ENCODE measurements at regions of chr3 and their contacts with region 1.

Region 1: GRCh38 chr3:126134219-126134975 is 46.0 kb downstream of the ALDH1L1 start:
- DNase-seq: peak; percentile 72 to 85 (median 78)
- H3K4me3 ChIP-seq: no peak overlapping the region
- H3K27ac ChIP-seq: no peak overlapping the region
- H3K4me1 ChIP-seq: no peaks in the 10 kb centered on the region
- H3K27me3 ChIP-seq: no peaks in the 10 kb centered on the region
- CTCF ChIP-seq: peak; percentile 75 to 92 (median 88)
- EP300 ChIP-seq: no peak
- POLR2A ChIP-seq: peak; percentile 23

Region 2: GRCh38 chr3:126197854-126198584 is 63.6 kb after region 1 on chr3:
- intact Hi-C with region 1: loop called in 2 of 4 experiments (anchors 5 to 10 kb)
- DNase-seq: peak; percentile 51 to 79 (median 70)
- H3K4me3 ChIP-seq: no peak overlapping the region
- H3K27ac ChIP-seq: no peak overlapping the region
- H3K4me1 ChIP-seq: no peaks in the 10 kb centered on the region
- H3K27me3 ChIP-seq: no peaks in the 10 kb centered on the region
- CTCF ChIP-seq: peak; percentile 28 to 57 (median 47)
- EP300 ChIP-seq: no peak
- POLR2A ChIP-seq: no peak

Region 3: DNA sequence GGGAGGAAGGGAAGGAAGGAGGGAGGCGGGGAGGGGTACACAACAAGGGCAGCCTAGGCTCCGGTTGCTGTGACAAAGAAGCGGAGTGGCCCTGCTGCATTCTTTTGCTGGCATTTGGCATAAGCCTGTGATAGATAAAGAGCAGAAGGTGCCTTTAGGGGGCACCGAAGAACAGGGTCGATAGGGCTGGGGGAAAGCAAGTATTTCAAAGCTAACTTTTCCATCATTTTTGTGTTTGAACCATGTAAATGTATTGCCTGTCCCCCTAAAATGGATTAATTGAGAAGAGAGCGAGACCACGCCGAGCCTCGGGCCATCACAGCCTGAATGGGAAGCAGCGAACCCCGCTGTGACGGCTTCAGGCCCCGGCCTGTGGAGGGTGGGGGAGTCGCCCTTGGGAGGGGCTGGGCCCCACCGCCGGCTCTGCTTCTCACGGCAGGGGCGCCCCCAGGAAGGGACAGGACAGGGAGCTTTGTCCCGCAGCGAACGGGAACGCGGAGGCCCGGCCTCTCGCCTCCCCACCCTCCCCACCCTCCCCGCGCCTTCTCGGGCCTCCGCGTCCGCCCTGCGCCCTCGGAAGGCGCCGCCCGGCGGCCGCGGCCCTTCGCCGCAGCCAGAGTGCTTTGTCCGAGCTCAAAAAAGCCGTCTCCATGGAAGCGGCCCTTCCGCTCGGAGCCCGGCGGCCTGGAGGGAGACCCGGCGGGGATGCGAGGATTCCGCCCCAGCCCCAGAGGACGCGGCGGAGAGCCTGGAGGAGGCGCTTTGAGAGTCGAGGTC is 78.4 kb after region 1 on chr3:
- intact Hi-C with region 1: loop called in 3 of 4 experiments (anchors 5 to 10 kb)
- DNase-seq: peak; percentile 57 to 81 (median 67)
- H3K4me3 ChIP-seq: peak overlapping the region; percentile 44
- H3K27ac ChIP-seq: peak overlapping the region; percentile 8 to 71
- H3K4me1 ChIP-seq: peaks cover 4% of the 10 kb centered on the region
- H3K27me3 ChIP-seq: no peaks in the 10 kb centered on the region
- CTCF ChIP-seq: peak in 1 of 3 donors; percentile 42
- EP300 ChIP-seq: no peak
- POLR2A ChIP-seq: peak; percentile 5

Region 4: DNA sequence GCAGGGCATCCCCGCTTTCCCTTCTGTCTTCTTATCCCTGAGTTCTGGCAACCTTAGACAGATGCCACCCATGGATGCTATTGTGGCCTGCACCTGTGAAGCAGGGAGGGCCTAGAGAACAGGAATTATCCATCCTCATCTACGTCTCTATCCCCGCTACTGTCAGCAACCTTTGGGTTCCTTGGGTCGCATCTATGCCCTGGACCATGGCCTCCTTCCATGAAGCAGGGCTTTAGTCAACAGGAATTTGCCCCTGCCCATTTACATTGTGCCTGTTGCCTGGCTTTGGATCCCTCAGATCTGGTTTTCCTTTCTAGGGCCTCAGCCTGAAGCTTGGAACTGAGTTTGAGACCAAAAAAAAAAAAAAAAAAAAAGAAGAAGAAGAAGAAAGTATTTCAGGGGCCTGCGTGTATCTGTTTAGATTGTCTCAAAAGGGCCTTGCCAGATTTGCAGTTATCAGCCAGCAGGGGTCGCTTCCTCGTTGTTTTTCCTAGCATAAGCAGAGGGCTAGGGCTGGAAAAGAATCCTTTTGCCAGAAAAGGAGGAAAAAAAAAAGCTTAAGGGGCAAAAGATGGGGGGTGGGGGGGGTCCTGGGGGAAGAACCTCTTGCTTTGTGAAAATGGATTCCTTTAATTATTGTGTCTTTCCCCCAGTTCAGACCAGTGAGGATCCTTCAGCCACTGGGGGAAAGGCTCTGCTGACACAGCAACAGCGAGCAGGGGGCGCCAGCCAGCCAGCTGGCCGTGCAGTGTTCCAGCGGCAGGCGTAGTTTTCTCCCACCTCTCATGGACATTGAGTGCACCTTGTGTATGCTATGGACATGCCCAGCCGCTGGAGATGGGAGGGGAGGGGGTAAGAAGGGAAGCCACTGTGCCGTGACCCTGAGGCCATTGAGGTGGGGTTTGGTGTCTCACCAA is 111.7 kb after region 1 on chr3:
- intact Hi-C with region 1: loop called in 1 of 4 experiments (anchors 5 kb)
- DNase-seq: peak in 3 of 5 donors; percentile 68 to 77 (median 75)
- H3K4me3 ChIP-seq: no peak overlapping the region
- H3K27ac ChIP-seq: no peak overlapping the region
- H3K4me1 ChIP-seq: no peaks in the 10 kb centered on the region
- H3K27me3 ChIP-seq: no peaks in the 10 kb centered on the region
- CTCF ChIP-seq: peak in 1 of 3 donors; percentile 19
- EP300 ChIP-seq: no peak
- POLR2A ChIP-seq: no peak

Region 5: DNA sequence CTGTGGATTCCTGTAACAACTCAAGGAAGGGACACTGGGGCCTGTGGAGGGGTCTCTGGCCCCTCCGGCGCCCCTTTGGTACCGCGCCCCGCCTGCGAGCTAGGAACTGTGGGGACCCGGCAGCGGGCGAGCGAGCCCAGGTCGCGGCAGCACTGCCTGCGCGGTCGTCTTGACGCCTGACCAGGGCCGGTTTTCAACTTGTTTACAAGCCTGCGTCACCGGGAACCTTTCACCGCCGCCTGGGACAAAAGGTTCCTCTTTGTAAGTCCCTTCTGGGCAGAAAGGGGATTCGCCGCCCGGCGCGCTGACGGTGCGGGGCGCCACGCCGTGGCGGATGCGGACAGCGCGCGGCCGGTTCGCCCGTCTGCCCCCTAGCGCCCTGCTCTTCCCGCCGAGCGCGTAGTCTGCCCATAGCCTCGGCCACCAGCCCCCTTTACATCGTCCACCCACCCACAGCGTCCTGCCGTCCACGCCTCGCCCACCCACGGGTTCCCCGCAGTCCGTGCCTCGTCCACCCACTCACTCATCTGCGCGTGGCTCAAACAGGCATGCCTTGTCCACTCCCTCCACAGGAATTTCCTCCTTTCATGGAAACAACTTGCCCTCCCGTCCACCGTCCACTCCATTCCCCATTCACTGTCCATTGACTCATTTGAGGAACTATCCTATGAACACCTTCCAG is 254.9 kb after region 1 on chr3:
- intact Hi-C with region 1: loop called (anchors 2 to 5 kb)
- DNase-seq: peak; percentile 87 to 96 (median 91)
- H3K4me3 ChIP-seq: peak overlapping the region; percentile 34
- H3K27ac ChIP-seq: peak overlapping the region; percentile 79 to 81
- H3K4me1 ChIP-seq: peaks cover 4% of the 10 kb centered on the region
- H3K27me3 ChIP-seq: no peaks in the 10 kb centered on the region
- CTCF ChIP-seq: peak; percentile 95 to 100 (median 100)
- EP300 ChIP-seq: peak; percentile 87
- POLR2A ChIP-seq: peak; percentile 73

Region 6: DNA sequence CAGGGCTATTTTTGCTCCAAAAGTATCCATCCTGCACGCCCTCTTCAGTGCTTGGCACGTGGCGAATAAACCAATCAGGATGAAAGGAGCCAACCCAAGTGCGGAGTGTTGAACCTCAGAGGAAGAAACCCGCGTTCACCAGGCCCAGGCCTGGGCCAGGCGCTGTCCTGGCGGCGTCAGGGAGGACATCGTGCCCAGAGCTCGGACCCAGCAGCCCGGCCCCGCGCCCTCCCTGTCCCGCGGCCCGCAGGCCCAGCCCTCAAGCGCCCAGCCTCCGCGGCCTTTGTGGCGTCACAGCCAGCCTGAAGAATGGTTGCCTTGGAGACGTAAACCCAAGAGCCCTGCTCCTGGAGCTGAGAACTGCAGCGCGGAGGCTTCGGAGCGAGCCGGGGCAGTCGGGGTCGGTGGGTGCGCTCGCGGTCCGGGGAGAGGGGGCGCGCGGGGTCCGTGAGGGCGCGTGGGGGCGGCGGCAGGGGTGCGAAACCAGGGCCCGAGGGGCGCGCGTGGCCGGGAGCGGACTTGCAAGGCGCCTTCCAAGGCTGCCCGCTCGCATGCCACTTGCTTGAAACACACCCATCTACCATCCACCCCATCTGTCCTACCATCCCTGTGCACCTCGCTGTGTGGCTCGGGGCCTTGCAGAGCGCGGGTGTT is 260.3 kb after region 1 on chr3 and contains the start of gene CFAP100:
- intact Hi-C with region 1: loop called (anchors 2 to 5 kb)
- DNase-seq: peak; percentile 43 to 74 (median 59)
- H3K4me3 ChIP-seq: peak within 1 kb of the TSS; percentile 1
- H3K27ac ChIP-seq: no peak within 1 kb of the TSS
- H3K4me1 ChIP-seq: peaks cover 3% of the 10 kb centered on the region
- H3K27me3 ChIP-seq: no peaks in the 10 kb centered on the region
- CTCF ChIP-seq: no peak
- EP300 ChIP-seq: no peak
- POLR2A ChIP-seq: no peak
- total RNA-seq, gene CFAP100: 1.5 to 21.3 (median 1.7) TPM in 5 of 7 donors, not detected in the others

Measured in ovary (tissue), 10 donors.